B cell (primary cell): ENCODE measurements at regions of chr16 and their contacts with region 1.

Region 1: DNA sequence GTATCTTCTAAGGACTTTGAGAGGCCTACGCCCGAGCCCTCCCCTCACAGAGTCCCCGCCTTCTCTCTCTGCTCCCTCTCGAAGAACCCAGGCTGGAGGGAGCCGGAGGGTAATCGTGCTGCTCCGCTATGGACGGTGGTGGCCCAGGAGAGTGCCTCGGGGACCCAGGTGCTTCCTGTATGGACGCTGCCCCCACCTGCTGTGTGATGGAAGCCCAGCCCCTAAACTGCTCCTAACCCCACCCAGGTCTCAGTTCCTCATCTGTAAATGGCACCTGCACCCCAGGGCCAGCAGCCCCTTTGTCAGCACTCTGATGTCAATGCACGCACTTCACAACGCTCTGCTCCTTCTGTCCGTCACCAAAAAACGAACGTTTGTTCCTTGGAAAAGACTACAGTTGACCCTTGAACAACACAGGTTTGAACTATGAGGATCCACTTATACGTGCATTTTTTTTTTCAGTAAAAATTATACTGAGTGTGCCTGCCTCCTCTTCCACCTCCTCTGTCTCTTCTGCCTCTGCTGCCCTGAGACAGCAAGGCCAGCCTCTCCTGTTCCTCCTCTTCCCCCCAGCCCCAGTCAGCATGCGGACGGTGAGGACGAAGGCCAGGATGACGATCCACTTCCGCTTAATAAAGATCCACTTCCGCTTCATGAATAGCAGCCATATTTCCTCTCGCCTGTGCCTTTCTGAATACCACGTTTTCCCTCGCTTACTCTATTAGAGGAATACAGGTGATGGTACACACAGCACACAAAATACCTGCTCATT is 118.3 kb downstream of the BANP start:
- DNase-seq: peak; percentile 97
- ATAC-seq: peak; percentile 93
- H3K4me3 ChIP-seq: peak overlapping the region in 2 of 5 experiments; percentile 12 to 42
- H3K4me3 Mint-ChIP-seq: peak overlapping the region; percentile 82
- H3K27ac ChIP-seq: peak overlapping the region; percentile 82 to 97
- H3K27ac Mint-ChIP-seq: peak overlapping the region; percentile 95
- H3K4me1 ChIP-seq: peaks cover 50 to 58% of the 10 kb centered on the region in 2 donors
- H3K4me1 Mint-ChIP-seq: peaks cover 51% of the 10 kb centered on the region
- H3K27me3 ChIP-seq: no peaks in the 10 kb centered on the region
- H3K27me3 Mint-ChIP-seq: no peaks in the 10 kb centered on the region
- CTCF ChIP-seq: no peak

Region 2: DNA sequence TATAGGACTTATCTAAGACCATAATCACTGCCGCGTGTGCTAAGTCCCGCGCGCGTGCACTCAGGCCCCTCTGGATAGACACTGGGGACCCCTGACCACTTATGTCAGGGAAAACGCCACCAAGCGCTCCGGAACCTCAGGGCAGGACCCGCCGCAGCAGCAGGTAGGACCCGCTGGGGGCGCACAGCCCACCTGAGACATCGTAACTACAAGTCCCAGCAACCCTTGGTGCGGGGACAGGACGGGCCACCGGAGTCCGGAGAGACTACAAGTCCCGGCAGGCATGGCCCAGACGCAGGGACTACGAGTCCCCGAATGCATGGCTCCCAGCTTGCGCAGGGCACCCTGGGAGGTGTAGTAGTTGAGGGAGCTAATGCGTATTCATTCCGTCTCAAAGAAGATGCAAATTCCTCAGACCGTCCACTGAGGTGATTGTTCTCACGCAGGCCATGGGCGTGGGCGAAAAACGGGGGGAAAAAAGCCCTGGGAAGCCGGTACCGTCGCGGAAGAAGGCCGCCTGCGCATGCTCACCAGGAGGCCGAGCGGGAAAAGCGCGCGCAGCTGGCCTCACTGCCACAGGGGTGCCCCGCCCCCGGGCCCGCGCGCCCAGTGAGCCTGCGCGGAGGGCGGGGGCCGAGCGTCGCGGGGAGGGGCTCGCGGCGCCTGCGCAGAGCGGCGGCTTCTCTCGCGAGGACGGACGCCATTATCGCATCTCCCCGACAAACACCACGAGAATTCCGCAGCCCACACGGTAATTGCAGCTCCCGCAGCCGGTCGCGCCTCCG is 118.6 kb before region 1 on chr16 and contains the start of gene BANP:
- CTCF ChIA-PET with region 1: no interaction called
- POLR2A ChIA-PET with region 1: no interaction called
- intact Hi-C with region 1: loop called (anchors 2 kb)
- DNase-seq: peak; percentile 99
- ATAC-seq: peak; percentile 91
- H3K4me3 ChIP-seq: peak within 1 kb of the TSS; percentile 75 to 99 (median 79)
- H3K4me3 Mint-ChIP-seq: peak within 1 kb of the TSS; percentile 97
- H3K27ac ChIP-seq: peak within 1 kb of the TSS; percentile 89 to 90
- H3K27ac Mint-ChIP-seq: peak within 1 kb of the TSS; percentile 99
- H3K4me1 ChIP-seq: peaks cover 46 to 65% of the 10 kb centered on the region in 2 donors
- H3K4me1 Mint-ChIP-seq: peaks cover 65% of the 10 kb centered on the region
- H3K27me3 ChIP-seq: no peaks in the 10 kb centered on the region
- H3K27me3 Mint-ChIP-seq: no peaks in the 10 kb centered on the region
- CTCF ChIP-seq: peak; percentile 70
- total RNA-seq, gene BANP: 181 and 212 TPM in 2 replicates

Region 3: GRCh38 chr16:88005181-88005581 is 64.4 kb before region 1 on chr16:
- CTCF ChIA-PET with region 1: no interaction called
- POLR2A ChIA-PET with region 1: no interaction called
- intact Hi-C with region 1: loop called (anchors 1 kb)
- DNase-seq: peak; percentile 72
- ATAC-seq: peak; percentile 86
- H3K4me3 ChIP-seq: no peak overlapping the region
- H3K4me3 Mint-ChIP-seq: peak overlapping the region; percentile 33
- H3K27ac ChIP-seq: peak overlapping the region; percentile 51 to 60
- H3K27ac Mint-ChIP-seq: peak overlapping the region; percentile 54
- H3K4me1 ChIP-seq: peaks cover 17 to 24% of the 10 kb centered on the region in 2 donors
- H3K4me1 Mint-ChIP-seq: peaks cover 41% of the 10 kb centered on the region
- H3K27me3 ChIP-seq: no peaks in the 10 kb centered on the region
- H3K27me3 Mint-ChIP-seq: no peaks in the 10 kb centered on the region
- CTCF ChIP-seq: peak; percentile 72